ENCODE measurements at regions of chr2 and their contacts with region 1.

Region 1: GRCh38 chr2:72142570-72143440 is 4.9 kb downstream of the CYP26B1 start:
- DNase-seq: peak in 1 of 2 experiments; percentile 24
- H3K4me3 ChIP-seq: no peak overlapping the region
- H3K27ac ChIP-seq: no peak overlapping the region
- H3K4me1 ChIP-seq: peaks cover 42% of the 10 kb centered on the region
- H3K27me3 ChIP-seq: no peaks in the 10 kb centered on the region
- CTCF ChIP-seq: no peak

Region 2: DNA sequence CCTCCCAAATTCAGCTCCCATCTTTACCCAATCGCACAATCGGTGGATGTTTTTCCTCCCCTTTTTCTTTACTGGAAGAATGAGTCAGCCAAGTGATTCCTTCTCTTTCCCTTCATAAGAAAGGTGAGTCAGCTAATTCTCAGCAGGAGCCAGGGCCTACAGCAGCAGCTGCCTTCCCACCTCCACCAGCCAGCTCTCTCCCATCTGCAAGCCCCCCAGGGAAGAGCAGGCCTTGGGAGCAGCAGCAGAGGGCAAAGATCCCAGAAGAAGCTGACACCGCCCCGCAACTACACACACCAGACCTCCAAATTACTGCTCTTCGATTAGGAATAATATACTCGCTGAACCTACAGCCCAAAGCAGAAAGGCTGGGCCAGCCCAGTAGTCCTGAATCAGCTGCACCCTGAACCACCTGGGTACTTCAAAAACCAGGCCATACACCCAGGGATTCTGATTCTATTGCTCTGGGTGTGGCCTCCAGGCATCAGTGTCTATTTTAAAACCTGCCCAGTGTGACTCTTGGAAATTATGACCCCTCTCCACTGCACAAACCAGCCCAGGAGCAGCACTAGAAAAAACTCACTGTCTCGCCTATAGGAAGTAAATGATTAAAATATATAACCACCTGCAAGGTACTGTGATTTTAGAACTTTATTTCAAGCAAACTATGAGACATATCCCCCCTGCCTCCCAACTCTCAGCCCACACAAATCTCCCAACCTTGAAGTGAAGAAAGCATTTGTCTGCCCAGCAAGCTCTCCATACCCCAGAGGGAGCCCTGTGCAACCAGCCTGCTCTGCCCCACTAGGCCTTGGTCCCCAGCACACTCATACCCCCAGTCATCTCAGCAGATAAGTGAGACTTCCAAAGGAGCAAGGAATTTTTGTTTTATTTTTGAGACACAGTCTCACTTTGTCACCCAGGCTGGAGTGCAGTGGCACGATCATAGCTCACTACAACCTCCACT is 921.4 kb after region 1 on chr2:
- CTCF ChIA-PET with region 1: interaction called, 14 read pairs
- POLR2A ChIA-PET with region 1: no interaction called
- intact Hi-C with region 1: no loop called
- DNase-seq: peak; percentile 35 to 66
- H3K4me3 ChIP-seq: no peak overlapping the region
- H3K27ac ChIP-seq: peak overlapping the region; percentile 68
- H3K4me1 ChIP-seq: peaks cover 25% of the 10 kb centered on the region
- H3K27me3 ChIP-seq: no peaks in the 10 kb centered on the region
- CTCF ChIP-seq: no peak